Left lung (tissue), 14 donors: ENCODE measurements at regions of chr16 and their contacts with region 1.

Region 1: GRCh38 chr16:67546761-67547422 is 15.4 kb upstream of the CTCF start:
- DNase-seq: peak; percentile 42 to 92 (median 74)
- ATAC-seq: peak; percentile 76
- H3K4me3 ChIP-seq: no peak overlapping the region
- H3K27ac ChIP-seq: peak overlapping the region; percentile 19 to 48
- H3K4me1 ChIP-seq: peaks cover 4 to 49% of the 10 kb centered on the region in 2 donors
- H3K27me3 ChIP-seq: no peaks in the 10 kb centered on the region
- CTCF ChIP-seq: peak; percentile 84 to 97

Region 2: DNA sequence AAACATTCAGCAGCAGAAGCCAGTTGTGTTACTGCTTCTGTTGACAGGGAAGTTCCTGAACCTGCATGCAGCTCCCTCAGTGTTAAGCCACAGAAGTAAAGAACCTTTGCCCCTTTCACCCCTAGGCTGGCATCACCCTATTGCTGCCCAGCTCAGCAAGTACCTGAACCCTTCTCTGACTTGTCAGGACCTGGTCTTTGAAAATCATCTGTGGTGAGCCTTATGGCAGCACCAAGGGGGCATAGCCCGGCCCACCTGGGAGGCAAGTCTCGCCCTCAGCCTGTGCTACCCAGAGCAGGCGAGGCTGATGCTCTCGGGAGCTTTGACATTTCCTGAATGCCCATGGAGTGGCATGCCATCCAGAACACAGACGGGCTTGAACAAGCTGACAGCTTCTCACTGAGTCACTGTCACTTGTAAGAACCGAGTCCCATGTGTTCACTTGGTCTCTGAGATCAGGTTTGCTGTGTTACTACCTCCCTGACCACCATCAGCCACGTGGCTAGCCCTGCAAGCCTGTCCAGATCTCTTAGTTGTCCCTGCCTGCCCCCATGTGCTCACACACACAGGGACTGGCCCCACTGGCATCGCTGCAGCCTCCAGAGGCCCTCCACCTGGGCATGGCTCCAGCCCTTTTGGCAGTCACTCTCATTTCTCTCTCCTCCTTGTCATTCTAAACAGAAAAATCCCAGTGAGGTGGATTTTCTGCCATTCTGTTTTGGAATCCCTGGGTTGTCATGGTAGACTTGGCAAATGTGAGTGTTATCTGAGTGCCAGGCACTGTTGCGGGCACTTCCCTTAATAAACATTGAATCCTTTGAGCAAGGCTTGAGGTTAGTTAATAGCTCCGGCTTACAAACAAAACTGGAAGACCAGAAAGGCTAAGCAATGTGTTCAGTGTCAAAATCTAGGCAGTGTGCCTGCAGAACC is 95.2 kb after region 1 on chr16:
- intact Hi-C with region 1: loop called in 1 of 2 experiments (anchors 10 kb)
- DNase-seq: peak in 1 of 4 donors; percentile 71
- ATAC-seq: peak; percentile 78
- H3K4me3 ChIP-seq: no peak overlapping the region
- H3K27ac ChIP-seq: peak overlapping the region in 1 of 2 donors; percentile 3
- H3K4me1 ChIP-seq: peaks cover 0 to 16% of the 10 kb centered on the region in 2 donors
- H3K27me3 ChIP-seq: peaks cover 14 to 26% of the 10 kb centered on the region in 2 donors
- CTCF ChIP-seq: no peak

Region 3: GRCh38 chr16:67659648-67660563 is 113.0 kb after region 1 on chr16 and contains the start of gene ACD:
- intact Hi-C with region 1: loop called in 1 of 2 experiments (anchors 10 kb)
- DNase-seq: peak; percentile 92 to 98 (median 94)
- ATAC-seq: peak; percentile 95
- H3K4me3 ChIP-seq: peak within 1 kb of the TSS; percentile 83 to 96
- H3K27ac ChIP-seq: peak within 1 kb of the TSS; percentile 95 to 98
- H3K4me1 ChIP-seq: peaks cover 13 to 22% of the 10 kb centered on the region in 2 donors
- H3K27me3 ChIP-seq: peaks cover under 1 to 8% of the 10 kb centered on the region in 2 donors
- CTCF ChIP-seq: no peak
- polyA plus RNA-seq, gene ACD: 20.2 to 27.5 (median 25.4) TPM